H1 (cell line): ENCODE measurements at regions of chr12 and their contacts with region 1.

Region 1: DNA sequence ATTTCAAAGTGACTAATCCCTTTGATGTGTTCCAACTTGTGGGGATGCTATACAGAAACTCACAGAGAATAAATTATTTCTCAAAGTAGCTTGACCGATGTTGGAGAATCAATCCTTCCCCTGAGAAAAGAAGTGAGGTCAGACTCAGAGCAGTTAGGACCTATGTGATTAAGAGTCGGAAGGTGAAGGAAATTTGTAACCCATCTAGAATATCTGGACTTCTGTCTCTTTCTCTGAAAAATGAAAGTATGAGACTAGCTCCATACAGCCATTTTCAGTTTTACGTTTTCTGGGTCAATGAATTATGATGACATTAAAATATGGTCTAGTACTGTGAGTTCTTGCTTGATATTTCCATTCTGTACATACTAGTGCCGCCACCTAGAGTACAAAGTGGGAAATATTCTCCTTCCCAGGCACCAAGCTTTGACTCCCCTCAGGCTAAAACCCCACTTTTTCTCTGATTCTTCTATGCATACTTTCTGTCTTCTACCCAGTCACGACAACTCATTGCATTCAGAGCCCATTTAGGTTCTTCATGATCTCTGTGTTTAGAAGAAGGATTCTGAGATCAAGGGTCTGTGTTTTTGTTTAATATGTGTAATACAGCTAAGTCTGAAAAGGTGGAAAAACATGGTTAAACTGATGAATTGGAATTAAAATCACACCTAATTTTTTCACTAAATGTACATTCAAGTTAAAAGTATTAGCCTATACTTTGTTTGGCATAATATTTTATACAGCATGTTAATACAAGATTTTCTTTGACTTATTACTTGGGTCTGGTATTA is 6.9 kb upstream of the NTS start:
- DNase-seq: no peak
- H3K4me3 ChIP-seq: no peak overlapping the region
- H3K27ac ChIP-seq: no peak overlapping the region
- H3K4me1 ChIP-seq: peaks cover 0 to 2% (median 0%) of the 10 kb centered on the region in 4 experiments; a peak in 1 of 7 replicates
- H3K27me3 ChIP-seq: no peaks in the 10 kb centered on the region
- CTCF ChIP-seq: peak in 2 of 3 experiments; percentile 65 to 75; a peak in 3 of 4 replicates
- EP300 ChIP-seq: no peak
- POLR2A ChIP-seq: no peak
- RAD21 ChIP-seq: peak; percentile 82 to 83

Region 2: DNA sequence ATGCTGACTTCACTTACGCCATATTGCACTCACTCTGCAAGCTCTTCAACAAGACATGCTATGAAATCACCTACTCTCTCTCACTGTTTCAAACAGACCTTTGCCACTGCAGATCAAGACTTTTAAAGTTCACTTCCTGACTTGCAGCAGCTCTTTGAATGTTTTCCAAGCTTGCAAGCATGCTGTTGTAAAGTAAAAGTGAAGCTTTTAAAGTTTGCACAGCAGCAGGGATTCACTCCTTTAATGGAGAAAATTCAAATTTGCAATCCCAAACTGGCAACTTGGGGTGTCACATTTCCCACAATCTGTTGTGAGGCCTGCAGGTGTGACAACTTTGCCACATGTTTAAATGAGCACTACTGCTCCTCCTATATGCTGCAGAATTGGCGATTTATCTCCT is 316.3 kb before region 1 on chr12:
- CTCF ChIA-PET with region 1: interaction called, 10 read pairs
- POLR2A ChIA-PET with region 1: no interaction called
- DNase-seq: no peak
- H3K4me3 ChIP-seq: no peak overlapping the region; a peak in 1 of 8 replicates
- H3K27ac ChIP-seq: peak overlapping the region; percentile 49; the same call in 1 of the 2 replicates
- H3K4me1 ChIP-seq: peaks cover 0 to 18% (median 3%) of the 10 kb centered on the region in 4 experiments; a peak in 3 of 7 replicates
- H3K27me3 ChIP-seq: no peaks in the 10 kb centered on the region
- CTCF ChIP-seq: no peak
- EP300 ChIP-seq: no peak
- POLR2A ChIP-seq: no peak
- RAD21 ChIP-seq: no peak

Region 3: DNA sequence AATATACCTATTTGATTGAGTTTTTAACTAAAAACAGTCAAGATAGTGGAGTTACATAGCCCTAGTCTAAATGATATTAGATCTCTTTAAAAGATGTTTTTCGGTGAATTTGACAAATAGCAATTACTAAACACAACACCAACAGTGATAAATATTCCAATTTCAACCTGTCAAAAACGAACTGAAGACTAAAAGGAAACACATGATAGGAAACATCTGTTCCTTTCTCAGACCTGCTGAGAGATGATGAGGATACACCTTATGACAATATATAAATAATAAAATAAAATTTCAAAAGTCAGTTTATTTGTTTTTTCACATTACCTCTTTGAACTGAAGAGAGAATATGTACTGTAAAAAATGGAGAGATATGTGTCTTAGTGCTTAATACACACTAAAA is 263.6 kb before region 1 on chr12:
- CTCF ChIA-PET with region 1: interaction called, 11 read pairs
- POLR2A ChIA-PET with region 1: no interaction called
- DNase-seq: no peak
- H3K4me3 ChIP-seq: no peak overlapping the region
- H3K27ac ChIP-seq: no peak overlapping the region
- H3K4me1 ChIP-seq: no peaks in the 10 kb centered on the region
- H3K27me3 ChIP-seq: no peaks in the 10 kb centered on the region
- CTCF ChIP-seq: no peak
- EP300 ChIP-seq: no peak
- POLR2A ChIP-seq: no peak
- RAD21 ChIP-seq: no peak

Region 4: DNA sequence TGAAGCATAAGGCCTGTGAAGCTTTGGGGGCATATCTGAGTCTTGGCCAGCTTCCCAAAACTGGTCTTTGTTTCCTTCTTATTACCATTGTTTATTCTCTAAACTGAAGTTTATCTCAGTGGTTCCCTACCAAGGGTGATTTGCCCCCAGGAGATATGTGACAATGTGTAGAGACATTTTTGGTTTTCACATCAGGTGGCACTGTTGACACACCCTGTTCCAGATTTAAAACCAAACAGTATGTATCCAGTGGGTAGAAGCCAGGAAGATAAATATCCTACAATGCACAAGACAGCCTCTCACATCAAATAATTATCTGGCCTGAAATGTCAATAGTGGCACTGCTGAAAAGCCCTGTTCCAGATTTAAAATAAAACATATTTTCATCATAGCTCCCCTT is 53.1 kb before region 1 on chr12:
- CTCF ChIA-PET with region 1: interaction called, 17 read pairs
- POLR2A ChIA-PET with region 1: no interaction called
- DNase-seq: no peak
- H3K4me3 ChIP-seq: no peak overlapping the region
- H3K27ac ChIP-seq: no peak overlapping the region
- H3K4me1 ChIP-seq: no peaks in the 10 kb centered on the region
- H3K27me3 ChIP-seq: no peaks in the 10 kb centered on the region
- CTCF ChIP-seq: no peak
- EP300 ChIP-seq: no peak
- POLR2A ChIP-seq: no peak
- RAD21 ChIP-seq: no peak

Region 5: DNA sequence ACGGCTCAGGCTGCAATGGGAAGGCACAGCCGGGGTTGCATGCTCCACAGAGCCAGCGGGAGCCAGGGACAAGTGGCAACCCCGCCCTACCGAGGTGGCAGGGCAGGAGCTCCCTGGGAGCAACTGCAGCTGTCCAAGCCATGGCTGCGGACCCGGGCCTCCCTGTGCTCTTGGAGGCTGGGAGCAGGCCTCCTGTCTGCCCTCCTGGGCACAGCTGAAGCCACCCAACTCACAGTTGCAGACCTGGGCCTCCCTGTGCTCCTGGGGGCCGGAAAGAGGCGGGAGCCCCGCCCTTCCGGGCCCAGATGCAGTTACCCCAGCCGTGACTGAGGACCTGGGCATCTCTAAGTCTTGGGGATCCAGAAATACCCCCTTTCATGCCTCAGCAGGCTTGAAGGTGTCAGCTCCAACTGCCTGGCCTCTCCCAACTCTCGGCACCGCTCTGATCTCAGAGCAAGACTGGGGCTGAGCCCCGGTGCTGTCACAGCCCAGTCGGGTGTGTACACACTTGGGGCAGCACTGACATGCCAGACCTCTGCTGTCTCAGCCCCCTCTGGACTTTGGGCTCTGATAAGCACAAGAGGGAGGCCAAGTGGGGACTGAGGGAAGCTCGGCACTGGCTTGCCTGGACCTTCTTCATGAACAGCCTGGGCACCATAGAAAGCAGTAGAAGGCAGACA is 23.4 kb before region 1 on chr12:
- CTCF ChIA-PET with region 1: interaction called, 16 read pairs
- POLR2A ChIA-PET with region 1: no interaction called
- DNase-seq: no peak
- H3K4me3 ChIP-seq: no peak overlapping the region
- H3K27ac ChIP-seq: no peak overlapping the region
- H3K4me1 ChIP-seq: peaks cover 0 to 3% (median 0%) of the 10 kb centered on the region in 4 experiments; a peak in 1 of 7 replicates
- H3K27me3 ChIP-seq: no peaks in the 10 kb centered on the region
- CTCF ChIP-seq: no peak
- EP300 ChIP-seq: no peak
- POLR2A ChIP-seq: no peak
- RAD21 ChIP-seq: no peak